ENCODE measurements at regions of chr3 and their contacts with region 1.

Region 1: DNA sequence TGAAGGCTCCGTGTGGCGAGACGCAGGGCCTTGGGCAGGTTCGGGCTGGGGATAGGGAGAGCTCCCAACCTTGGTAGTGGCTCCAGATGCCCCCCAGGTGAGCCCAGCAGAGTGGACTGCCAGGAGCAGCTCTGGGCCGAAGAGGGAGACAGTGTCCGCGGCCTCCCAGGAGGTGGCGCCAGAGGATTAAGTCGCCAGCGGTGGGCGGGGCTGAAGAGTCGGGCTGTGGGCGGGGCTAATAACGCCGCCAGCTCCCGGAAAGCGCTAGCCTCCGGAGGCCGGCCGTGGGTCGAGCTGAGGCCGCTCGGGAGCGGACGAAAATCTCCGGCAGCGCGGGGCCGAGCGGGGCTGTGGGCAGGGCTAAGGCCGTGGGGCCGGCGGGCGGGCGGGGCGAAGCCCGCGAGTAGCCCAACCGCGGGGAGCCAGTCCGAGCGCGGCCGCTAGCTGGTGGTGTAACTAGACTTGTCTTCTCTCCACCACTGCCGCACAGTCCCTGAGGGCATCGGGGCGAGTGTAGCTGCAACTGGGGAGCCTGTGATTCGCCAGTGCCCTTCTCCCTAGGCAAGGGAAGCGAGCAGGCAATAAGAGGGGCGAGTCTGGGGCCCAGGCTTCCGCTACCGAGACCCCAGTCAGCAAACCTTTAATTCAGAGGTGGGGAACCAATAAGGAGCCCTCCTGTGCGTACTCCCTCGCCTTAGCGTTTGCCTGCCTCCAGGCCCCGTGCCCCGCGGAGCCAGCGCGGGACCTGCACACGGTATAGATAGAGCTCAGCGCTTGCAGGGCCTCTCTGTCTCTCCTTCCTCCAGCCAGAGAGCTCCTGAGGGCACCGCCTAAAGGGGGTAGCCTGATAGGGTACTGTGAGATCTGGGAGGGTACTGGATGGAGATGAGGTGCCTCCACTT is 14.4 kb upstream of the BSN start:
- DNase-seq: peak; percentile 76
- ATAC-seq: peak; percentile 96
- H3K4me3 ChIP-seq: peak overlapping the region; percentile 46 to 57
- H3K27ac ChIP-seq: peak overlapping the region; percentile 56
- H3K4me1 ChIP-seq: peaks cover 7 to 14% of the 10 kb centered on the region in 2 experiments; a peak in 3 of 4 replicates
- H3K27me3 ChIP-seq: peaks cover 14% of the 10 kb centered on the region; the same call in 1 of the 2 replicates
- CTCF ChIP-seq: peak; percentile 82 to 92 (median 91)
- POLR2A ChIP-seq: no peak
- RAD21 ChIP-seq: peak; percentile 99

Region 2: GRCh38 chr3:48548729-48549705 is 990.9 kb before region 1 on chr3:
- CTCF ChIA-PET with region 1: no interaction called
- POLR2A ChIA-PET with region 1: no interaction called
- RAD21 ChIA-PET with region 1: no interaction called
- intact Hi-C with region 1: no loop called
- DNase-seq: peak; percentile 54
- ATAC-seq: peak; percentile 99
- H3K4me3 ChIP-seq: no peak overlapping the region
- H3K27ac ChIP-seq: no peak overlapping the region
- H3K4me1 ChIP-seq: peaks cover 0 to 6% of the 10 kb centered on the region in 2 experiments; a peak in 1 of 4 replicates
- H3K27me3 ChIP-seq: no peaks in the 10 kb centered on the region
- CTCF ChIP-seq: peak in 2 of 3 experiments; percentile 94 to 98; a peak in 4 of 6 replicates
- POLR2A ChIP-seq: no peak
- RAD21 ChIP-seq: no peak

Region 3: DNA sequence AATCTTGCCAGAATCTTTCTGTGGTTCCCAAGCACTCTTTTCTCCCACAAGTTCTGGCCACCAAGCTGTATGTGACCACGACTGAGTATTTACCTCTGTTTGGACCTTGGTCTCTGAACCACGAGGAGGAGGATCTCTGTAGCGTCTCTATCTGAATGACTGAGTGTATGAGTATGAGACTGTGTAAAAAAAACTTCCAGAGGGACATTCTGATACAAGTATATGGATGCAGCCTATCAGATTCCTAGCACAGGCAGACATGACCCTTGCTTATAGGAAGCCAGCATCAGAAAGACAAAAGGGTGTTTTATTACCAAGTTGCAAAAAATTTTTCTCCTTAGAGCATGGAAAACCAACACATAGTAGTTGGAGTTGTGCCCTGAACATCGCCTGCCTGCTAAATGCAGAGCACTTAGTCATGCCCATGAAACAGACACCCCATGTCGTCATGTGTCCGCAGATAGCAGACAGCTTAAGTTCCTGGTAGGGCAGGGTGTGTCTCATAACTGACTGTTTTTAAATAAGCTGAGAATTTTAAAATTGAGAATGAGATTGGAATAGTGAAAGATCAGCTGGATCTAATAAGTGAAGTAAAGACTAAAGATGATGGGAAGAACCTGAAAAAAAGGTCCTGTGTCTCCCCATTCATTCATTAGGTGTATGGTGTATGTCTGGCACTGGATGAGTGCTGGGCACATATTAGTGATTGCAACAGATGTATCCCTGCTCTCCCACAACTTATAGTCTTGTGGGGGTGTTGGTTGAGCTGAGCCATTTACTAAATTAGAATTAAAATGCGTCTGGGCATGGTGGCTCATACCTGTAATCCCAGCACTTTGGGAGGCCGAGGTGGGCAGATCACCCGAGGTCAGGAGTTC is 38.9 kb before region 1 on chr3:
- CTCF ChIA-PET with region 1: no interaction called
- POLR2A ChIA-PET with region 1: no interaction called
- RAD21 ChIA-PET with region 1: no interaction called
- intact Hi-C with region 1: no loop called
- DNase-seq: peak; percentile 81
- ATAC-seq: peak; percentile 86
- H3K4me3 ChIP-seq: peak overlapping the region in 1 of 2 experiments; percentile 20; a peak in 2 of 4 replicates
- H3K27ac ChIP-seq: peak overlapping the region; percentile 67
- H3K4me1 ChIP-seq: peaks cover 26 to 62% of the 10 kb centered on the region in 2 experiments
- H3K27me3 ChIP-seq: no peaks in the 10 kb centered on the region
- CTCF ChIP-seq: no peak
- POLR2A ChIP-seq: no peak
- RAD21 ChIP-seq: no peak

Region 4: GRCh38 chr3:49553692-49554632 is 14.1 kb after region 1 on chr3 and contains the start of gene BSN:
- CTCF ChIA-PET with region 1: interaction called, 10 read pairs
- POLR2A ChIA-PET with region 1: interaction called, 6 read pairs
- RAD21 ChIA-PET with region 1: interaction called in 1 of 2 experiments, 4 read pairs
- intact Hi-C with region 1: no loop called
- DNase-seq: peak; percentile 57
- ATAC-seq: peak; percentile 92
- H3K4me3 ChIP-seq: peak within 1 kb of the TSS; percentile 57 to 72
- H3K27ac ChIP-seq: no peak within 1 kb of the TSS; the same call in 1 of the 2 replicates
- H3K4me1 ChIP-seq: peaks cover 6 to 16% of the 10 kb centered on the region in 2 experiments; a peak in 3 of 4 replicates
- H3K27me3 ChIP-seq: peaks cover 17% of the 10 kb centered on the region; the same call in 1 of the 2 replicates
- CTCF ChIP-seq: no peak
- POLR2A ChIP-seq: no peak
- RAD21 ChIP-seq: no peak
- total RNA-seq, gene BSN: 1.5 TPM

Region 5: GRCh38 chr3:49668414-49668797 is 128.5 kb after region 1 on chr3:
- CTCF ChIA-PET with region 1: interaction called, 159 read pairs
- POLR2A ChIA-PET with region 1: interaction called, 26 read pairs
- RAD21 ChIA-PET with region 1: interaction called, 42 to 49 read pairs
- intact Hi-C with region 1: loop called (anchors 1 kb)
- DNase-seq: no peak
- ATAC-seq: no peak
- H3K4me3 ChIP-seq: no peak overlapping the region
- H3K27ac ChIP-seq: no peak overlapping the region
- H3K4me1 ChIP-seq: peaks cover 6 to 39% of the 10 kb centered on the region in 2 experiments; a peak in 3 of 4 replicates
- H3K27me3 ChIP-seq: no peaks in the 10 kb centered on the region
- CTCF ChIP-seq: no peak
- POLR2A ChIP-seq: no peak
- RAD21 ChIP-seq: no peak

Region 6: DNA sequence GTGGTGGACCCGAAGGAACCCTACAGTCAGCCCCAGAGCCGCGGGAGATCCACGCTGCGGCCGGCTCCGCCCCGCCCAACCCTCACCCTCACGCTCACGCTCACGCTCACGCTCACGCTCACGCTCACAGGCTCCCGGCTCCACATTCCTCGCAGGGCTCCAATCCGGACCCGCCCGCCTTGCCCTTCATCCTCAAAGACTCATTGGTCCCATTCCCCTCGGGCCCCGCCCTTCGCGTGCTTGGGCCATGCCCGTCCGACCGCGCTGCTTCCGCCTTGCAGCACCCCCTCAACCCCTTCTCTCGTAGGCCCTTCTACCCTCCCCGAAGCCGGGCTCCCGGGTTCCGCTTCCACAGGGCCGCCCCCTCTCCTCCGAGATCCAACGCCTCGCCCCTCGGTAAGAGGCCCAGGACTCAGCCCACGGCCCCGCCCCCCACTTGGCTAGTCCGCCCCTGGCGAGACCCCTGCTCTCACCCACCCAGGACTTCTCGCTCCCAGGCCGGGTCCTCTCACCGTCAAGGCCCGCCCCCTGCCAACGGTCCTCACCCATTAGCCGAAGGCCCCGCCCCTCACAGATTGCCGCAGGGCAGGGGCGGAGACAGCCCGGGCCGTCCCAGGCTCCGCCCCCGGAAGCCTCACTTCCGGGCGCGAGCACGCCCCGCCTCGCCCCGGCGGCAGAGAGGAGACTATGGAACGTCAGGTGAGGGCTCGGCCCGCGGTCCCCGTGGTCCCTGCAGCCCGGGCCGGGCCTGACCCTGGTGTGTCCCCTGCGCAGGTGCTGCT is 134.0 kb after region 1 on chr3 and contains the start of gene APEH:
- CTCF ChIA-PET with region 1: interaction called, 159 read pairs
- POLR2A ChIA-PET with region 1: interaction called, 26 read pairs
- RAD21 ChIA-PET with region 1: interaction called, 42 to 49 read pairs
- intact Hi-C with region 1: loop called (anchors 1 kb)
- DNase-seq: peak; percentile 97
- ATAC-seq: peak; percentile 82
- H3K4me3 ChIP-seq: peak within 1 kb of the TSS; percentile 90 to 98
- H3K27ac ChIP-seq: peak within 1 kb of the TSS; percentile 98
- H3K4me1 ChIP-seq: peaks cover 10 to 36% of the 10 kb centered on the region in 2 experiments; a peak in 3 of 4 replicates
- H3K27me3 ChIP-seq: no peaks in the 10 kb centered on the region
- CTCF ChIP-seq: no peak
- POLR2A ChIP-seq: peak; percentile 71
- RAD21 ChIP-seq: no peak
- total RNA-seq, gene APEH: 246 TPM

Region 7: DNA sequence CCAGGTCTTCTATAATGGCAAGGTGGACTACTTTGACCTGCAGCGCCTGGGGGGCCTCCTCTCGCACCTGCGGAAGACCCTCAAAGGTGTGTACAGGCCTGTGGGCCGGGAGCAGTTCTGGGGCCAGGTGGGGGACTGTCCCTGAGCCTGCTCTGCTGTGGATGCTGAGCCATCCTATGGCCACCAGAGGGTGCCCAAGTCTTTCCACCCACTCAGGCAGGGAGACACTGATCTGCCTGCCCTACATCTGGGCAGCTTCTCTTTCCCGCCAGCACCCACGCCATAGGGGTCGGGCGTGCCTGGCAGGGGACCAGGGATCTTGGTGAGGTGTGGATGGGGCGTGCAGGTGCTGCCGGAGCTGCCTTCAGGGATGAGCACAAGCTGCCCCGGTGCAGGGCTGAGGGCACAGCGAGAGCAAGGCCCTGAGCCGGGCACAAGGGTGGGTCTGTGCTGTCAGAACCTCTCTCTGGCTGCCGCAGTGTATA is 163.6 kb after region 1 on chr3:
- CTCF ChIA-PET with region 1: interaction called, 25 read pairs
- POLR2A ChIA-PET with region 1: no interaction called
- RAD21 ChIA-PET with region 1: interaction called in 1 of 2 experiments, 4 read pairs
- intact Hi-C with region 1: no loop called
- DNase-seq: peak; percentile 22
- ATAC-seq: peak; percentile 93
- H3K4me3 ChIP-seq: no peak overlapping the region
- H3K27ac ChIP-seq: peak overlapping the region; percentile 5; the same call in 1 of the 2 replicates
- H3K4me1 ChIP-seq: no peaks in the 10 kb centered on the region
- H3K27me3 ChIP-seq: no peaks in the 10 kb centered on the region
- CTCF ChIP-seq: peak; percentile 76 to 91 (median 76)
- POLR2A ChIP-seq: no peak
- RAD21 ChIP-seq: peak; percentile 90

Region 8: DNA sequence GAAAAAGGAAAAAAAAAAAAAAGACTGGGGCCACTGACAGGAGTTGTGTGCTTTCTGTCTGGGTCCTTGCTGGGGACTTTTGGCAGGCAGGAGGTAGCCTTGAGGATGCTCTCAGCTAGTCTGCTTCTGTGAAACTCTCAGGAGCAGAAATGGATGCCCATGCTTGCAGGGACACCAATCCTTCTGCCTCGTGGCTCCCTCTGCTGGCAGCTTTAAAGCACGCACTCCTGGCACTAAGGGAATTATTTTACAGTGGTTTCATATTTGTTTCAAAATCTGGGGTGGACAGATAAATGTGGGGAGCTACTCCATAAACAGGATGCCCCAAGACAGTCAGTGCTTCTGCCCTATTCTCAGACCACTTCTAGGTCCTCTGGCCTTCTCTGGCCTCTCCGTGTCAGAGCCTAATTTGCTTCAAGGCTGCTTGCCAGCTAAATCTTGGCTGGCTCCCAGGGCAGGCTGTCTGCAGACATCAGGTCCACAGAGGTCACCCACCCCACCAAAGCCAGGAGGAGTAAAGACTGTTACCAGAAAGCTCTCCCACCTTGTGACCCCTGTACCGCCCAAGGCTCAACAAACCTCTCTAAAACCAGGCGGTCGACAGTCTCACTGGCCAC is 299.4 kb after region 1 on chr3:
- CTCF ChIA-PET with region 1: interaction called, 9 read pairs
- POLR2A ChIA-PET with region 1: no interaction called
- RAD21 ChIA-PET with region 1: interaction called, 3 to 4 read pairs
- intact Hi-C with region 1: loop called (anchors 2 kb)
- DNase-seq: peak; percentile 44
- ATAC-seq: peak; percentile 80
- H3K4me3 ChIP-seq: no peak overlapping the region
- H3K27ac ChIP-seq: no peak overlapping the region
- H3K4me1 ChIP-seq: peaks cover 4 to 10% of the 10 kb centered on the region in 2 experiments; a peak in 1 of 4 replicates
- H3K27me3 ChIP-seq: no peaks in the 10 kb centered on the region
- CTCF ChIP-seq: peak; percentile 85 to 92 (median 89)
- POLR2A ChIP-seq: no peak
- RAD21 ChIP-seq: peak; percentile 89